Psoas muscle (tissue), 8 donors: ENCODE measurements at regions of chr1 and their contacts with region 1.

Region 1: DNA sequence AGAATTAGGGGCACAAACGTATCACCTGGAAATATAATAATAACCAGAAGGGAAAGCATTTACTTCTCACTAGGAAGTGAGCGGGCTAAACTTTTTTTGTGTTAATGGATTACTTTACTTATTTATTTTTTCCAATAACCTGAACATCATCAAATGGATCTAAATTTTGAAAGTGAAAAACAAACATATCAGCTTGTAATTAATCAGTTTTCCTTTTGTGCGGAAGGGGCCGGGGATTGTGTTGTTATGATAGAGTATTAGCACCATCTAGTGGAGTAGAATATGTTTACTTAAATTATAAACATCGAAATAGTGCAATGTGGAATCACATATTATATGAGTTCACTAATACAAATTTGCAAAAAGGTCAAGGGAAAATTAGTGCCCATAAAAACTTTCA is 9.0 kb downstream of the CFH start:
- DNase-seq: no peak
- ATAC-seq: peak; percentile 41 to 88 (median 77)
- H3K4me3 ChIP-seq: peak overlapping the region; percentile 48
- H3K27ac ChIP-seq: no peak overlapping the region
- H3K4me1 ChIP-seq: peaks cover 5% of the 10 kb centered on the region
- H3K27me3 ChIP-seq: no peaks in the 10 kb centered on the region
- CTCF ChIP-seq: peak; percentile 58

Region 2: DNA sequence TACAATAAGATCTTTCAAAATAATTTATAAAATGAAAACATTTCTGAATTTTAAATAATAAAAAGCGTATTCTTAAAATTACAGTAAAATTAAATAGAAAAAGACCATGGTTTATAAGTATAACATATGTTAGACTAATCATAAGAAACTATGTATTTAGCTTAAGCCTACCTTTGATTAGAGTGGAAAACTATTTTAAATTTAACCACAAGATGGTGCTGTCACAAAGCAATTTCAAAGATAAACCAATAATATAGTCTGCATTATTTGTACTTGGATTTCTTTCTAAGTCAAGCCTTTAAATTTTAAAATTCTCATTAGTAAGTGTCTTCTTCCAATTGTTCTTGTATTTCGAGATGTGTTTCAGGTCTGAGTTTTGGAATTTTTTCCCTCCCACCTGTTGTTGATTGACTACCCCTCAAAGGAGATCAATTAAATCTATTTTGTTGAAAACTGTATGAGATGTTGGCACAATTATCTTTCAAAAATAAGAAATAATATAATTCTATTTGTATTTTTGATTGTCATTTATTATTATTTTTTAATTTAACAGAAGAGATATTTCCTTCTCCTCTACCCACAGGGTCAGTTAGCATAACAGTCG is 512.4 kb before region 1 on chr1:
- intact Hi-C with region 1: loop called (anchors 5 kb)
- DNase-seq: no peak
- ATAC-seq: no peak
- H3K4me3 ChIP-seq: no peak overlapping the region
- H3K27ac ChIP-seq: no peak overlapping the region
- H3K4me1 ChIP-seq: no peaks in the 10 kb centered on the region
- H3K27me3 ChIP-seq: no peaks in the 10 kb centered on the region
- CTCF ChIP-seq: peak; percentile 60

Region 3: DNA sequence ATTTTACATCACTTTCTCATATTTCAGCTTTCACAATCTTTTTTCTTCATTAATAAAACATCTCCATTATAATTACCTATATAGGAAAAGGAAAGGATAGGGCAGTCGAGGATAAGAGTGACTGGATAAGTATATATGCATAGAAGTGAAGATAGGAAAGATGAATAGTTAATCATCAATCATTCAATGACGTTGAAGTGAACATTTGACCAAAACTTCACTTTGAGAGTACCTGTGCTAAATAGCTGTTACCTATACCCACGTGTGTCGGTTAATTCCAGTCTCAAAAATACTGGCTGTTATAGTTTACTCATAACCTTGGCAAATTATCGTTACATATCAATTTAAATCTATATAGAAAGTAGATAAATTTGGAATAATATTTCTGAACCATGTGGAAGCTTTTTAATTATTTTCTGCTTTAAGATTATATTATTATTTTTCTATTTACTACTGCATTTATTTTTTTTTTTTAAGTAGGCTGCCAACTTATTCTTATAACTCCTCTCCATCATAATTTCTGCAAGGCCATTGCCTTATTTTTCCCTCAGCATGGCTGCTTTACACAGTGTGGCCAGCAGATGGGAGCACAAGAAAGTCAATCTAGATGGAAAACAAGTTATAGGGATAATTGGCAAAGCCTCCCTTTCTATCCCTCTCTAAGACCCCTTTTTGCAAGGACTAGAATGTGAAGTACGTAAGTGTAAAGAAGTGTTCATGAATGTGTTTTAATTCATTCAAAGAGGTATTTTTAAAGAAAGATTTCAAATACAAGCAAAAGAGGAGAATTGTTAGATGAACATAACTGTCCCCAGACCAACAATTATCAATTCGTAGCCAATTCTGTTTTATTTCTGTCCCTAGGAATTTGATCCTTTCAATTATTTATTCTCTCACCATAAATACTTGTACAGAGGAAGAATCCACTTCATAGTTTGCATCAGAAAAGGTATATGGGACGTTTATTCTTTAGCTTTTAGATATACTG is 343.0 kb before region 1 on chr1:
- intact Hi-C with region 1: loop called in 1 of 2 experiments (anchors 10 kb)
- DNase-seq: no peak
- ATAC-seq: no peak
- H3K4me3 ChIP-seq: no peak overlapping the region
- H3K27ac ChIP-seq: no peak overlapping the region
- H3K4me1 ChIP-seq: no peaks in the 10 kb centered on the region
- H3K27me3 ChIP-seq: no peaks in the 10 kb centered on the region
- CTCF ChIP-seq: no peak